ENCODE measurements at regions of chr13 and their contacts with region 1.

Region 1: DNA sequence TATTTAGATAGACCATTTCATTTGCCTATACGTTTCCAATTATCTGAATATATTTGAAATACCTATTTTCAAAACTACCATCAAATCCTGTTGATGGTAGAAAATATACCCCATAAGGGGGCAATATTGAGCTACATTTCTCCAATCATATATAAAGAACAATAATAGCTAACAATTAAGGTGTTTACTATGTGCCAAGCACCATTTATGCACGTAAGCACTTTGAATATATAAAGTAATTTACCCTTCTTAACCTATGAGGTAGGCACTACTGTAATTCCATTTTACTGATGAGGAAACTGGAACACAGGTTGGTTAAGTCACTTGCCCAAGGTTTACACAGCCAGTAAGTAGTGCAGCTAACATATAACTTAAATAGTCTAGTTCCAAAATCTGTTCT is 79.2 kb downstream of the UBL3 start:
- DNase-seq: no peak
- ATAC-seq: no peak
- H3K4me3 Mint-ChIP-seq: no peak overlapping the region
- H3K27ac Mint-ChIP-seq: no peak overlapping the region
- H3K4me1 Mint-ChIP-seq: no peaks in the 10 kb centered on the region
- H3K27me3 Mint-ChIP-seq: no peaks in the 10 kb centered on the region

Region 2: GRCh38 chr13:29428310-29429181 is 342.7 kb before region 1 on chr13:
- CTCF ChIA-PET with region 1: no interaction called
- POLR2A ChIA-PET with region 1: no interaction called
- DNase-seq: no peak
- ATAC-seq: no peak
- H3K4me3 Mint-ChIP-seq: no peak overlapping the region
- H3K27ac Mint-ChIP-seq: no peak overlapping the region
- H3K4me1 Mint-ChIP-seq: no peaks in the 10 kb centered on the region
- H3K27me3 Mint-ChIP-seq: peaks cover 43% of the 10 kb centered on the region

Region 3: GRCh38 chr13:29508130-29508875 is 262.9 kb before region 1 on chr13:
- CTCF ChIA-PET with region 1: interaction called, 13 read pairs
- POLR2A ChIA-PET with region 1: no interaction called
- DNase-seq: peak; percentile 78
- ATAC-seq: peak; percentile 79
- H3K4me3 Mint-ChIP-seq: no peak overlapping the region
- H3K27ac Mint-ChIP-seq: no peak overlapping the region
- H3K4me1 Mint-ChIP-seq: peaks cover 6% of the 10 kb centered on the region
- H3K27me3 Mint-ChIP-seq: no peaks in the 10 kb centered on the region

Region 4: DNA sequence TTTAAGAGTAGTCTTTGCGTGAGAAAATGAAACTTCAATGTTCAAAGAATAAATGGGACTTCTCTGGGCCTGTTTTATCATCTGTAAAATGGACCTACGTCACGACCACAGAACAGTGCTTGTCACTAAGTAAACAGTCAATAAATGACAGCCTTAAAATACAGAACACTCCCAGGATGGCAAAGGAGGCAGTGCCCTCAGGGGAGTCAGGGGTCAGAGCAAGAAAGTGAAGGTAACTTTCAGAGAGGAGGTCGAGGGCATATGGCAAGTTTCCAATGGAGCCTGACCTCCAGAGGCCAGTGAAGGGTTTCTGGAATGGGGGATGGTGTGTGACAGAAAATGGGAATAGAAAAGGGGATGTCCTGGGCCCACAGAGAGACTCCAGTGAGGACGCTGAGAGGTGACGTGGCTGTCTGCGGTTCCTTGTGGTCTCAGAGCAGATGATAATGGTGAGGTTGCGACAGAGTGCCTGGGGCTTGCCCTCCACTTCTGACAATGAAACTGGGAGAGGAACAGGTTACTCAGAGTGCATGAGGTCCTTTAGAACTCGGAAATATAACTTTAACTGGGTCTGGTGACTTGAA is 12.6 kb before region 1 on chr13:
- CTCF ChIA-PET with region 1: interaction called, 16 read pairs
- POLR2A ChIA-PET with region 1: no interaction called
- DNase-seq: peak; percentile 55
- ATAC-seq: peak; percentile 75
- H3K4me3 Mint-ChIP-seq: no peak overlapping the region
- H3K27ac Mint-ChIP-seq: peak overlapping the region; percentile 18
- H3K4me1 Mint-ChIP-seq: peaks cover 23% of the 10 kb centered on the region
- H3K27me3 Mint-ChIP-seq: no peaks in the 10 kb centered on the region

Region 5: GRCh38 chr13:29782798-29783197 is 11.6 kb after region 1 on chr13:
- CTCF ChIA-PET with region 1: interaction called, 11 read pairs
- POLR2A ChIA-PET with region 1: no interaction called
- DNase-seq: no peak
- ATAC-seq: no peak
- H3K4me3 Mint-ChIP-seq: no peak overlapping the region
- H3K27ac Mint-ChIP-seq: no peak overlapping the region
- H3K4me1 Mint-ChIP-seq: no peaks in the 10 kb centered on the region
- H3K27me3 Mint-ChIP-seq: no peaks in the 10 kb centered on the region

Region 6: DNA sequence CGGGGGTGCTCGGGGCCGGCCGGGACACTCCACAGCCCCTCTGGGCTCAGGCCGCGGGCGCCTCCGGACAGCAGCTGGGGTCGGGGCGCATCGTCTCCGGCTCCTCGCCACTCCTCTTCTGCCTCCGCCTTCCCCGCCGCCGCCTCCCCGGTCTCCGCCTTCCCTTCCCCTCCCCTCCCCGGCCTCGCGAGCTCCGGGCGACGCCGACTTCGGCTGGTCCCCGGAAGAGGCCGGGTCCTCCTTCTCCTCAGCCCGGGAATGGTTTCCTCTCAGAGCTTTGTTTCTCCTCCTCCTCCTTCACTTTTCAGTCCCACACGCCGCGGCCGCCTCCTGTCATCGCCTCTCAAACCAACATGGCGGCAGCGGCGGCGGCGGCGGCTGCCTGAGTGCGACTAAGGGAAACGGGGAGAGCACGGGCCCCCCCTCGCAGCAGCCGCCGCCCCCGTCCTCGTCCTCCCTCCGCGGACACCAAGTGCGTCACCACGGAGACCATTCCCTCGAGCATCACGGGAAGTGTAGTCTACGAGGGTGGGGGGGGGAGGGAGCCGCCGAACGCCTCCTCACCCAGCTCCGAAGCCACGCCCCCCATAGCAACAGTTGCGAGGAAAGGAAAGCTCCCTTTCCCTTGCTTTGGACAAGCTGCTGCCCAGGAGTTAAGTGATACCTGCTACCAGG is 79.1 kb after region 1 on chr13 and contains the start of gene UBL3:
- CTCF ChIA-PET with region 1: interaction called, 28 read pairs
- POLR2A ChIA-PET with region 1: no interaction called
- DNase-seq: peak; percentile 96
- ATAC-seq: peak; percentile 89
- H3K4me3 Mint-ChIP-seq: peak within 1 kb of the TSS; percentile 86
- H3K27ac Mint-ChIP-seq: peak within 1 kb of the TSS; percentile 99
- H3K4me1 Mint-ChIP-seq: peaks cover 35% of the 10 kb centered on the region
- H3K27me3 Mint-ChIP-seq: no peaks in the 10 kb centered on the region
- total RNA-seq, gene UBL3: 7.3 to 8.4 TPM

Region 7: DNA sequence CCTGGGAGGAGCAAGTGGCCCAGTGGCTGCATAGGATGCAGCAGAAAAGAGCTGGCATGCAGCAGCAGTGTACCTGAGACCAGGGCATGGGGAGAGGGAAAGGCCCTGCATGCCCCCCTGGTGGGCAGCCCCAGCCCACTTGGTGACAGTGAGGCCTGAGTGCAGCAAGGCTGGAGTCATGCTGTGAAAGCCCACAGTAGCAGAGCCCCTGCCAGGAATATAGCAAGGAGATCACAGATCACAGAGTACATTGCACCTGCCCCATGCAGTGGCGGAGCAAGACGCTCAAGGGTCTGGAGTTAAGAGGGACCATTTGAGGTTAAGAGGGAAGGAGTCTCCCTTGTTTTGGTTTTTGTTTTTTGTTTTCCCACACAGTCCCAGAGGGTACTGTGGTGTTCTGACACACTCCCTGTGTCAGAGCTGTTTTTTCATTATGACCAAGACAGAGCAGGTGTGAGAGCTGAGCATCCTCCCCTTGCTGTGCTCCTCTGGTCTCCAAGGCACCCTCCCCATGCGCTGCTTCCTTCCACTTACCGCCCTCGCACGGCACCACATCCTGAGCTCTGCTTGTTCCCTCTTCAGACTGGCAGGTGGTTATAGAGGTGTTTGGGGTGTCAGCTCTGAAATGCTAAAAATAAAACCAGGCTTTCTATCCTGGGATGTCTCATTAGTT is 164.2 kb after region 1 on chr13:
- CTCF ChIA-PET with region 1: interaction called, 23 read pairs
- POLR2A ChIA-PET with region 1: no interaction called
- DNase-seq: peak; percentile 90
- ATAC-seq: peak; percentile 95
- H3K4me3 Mint-ChIP-seq: peak overlapping the region; percentile 83
- H3K27ac Mint-ChIP-seq: peak overlapping the region; percentile 95
- H3K4me1 Mint-ChIP-seq: peaks cover 44% of the 10 kb centered on the region
- H3K27me3 Mint-ChIP-seq: peaks cover 1% of the 10 kb centered on the region

Region 8: DNA sequence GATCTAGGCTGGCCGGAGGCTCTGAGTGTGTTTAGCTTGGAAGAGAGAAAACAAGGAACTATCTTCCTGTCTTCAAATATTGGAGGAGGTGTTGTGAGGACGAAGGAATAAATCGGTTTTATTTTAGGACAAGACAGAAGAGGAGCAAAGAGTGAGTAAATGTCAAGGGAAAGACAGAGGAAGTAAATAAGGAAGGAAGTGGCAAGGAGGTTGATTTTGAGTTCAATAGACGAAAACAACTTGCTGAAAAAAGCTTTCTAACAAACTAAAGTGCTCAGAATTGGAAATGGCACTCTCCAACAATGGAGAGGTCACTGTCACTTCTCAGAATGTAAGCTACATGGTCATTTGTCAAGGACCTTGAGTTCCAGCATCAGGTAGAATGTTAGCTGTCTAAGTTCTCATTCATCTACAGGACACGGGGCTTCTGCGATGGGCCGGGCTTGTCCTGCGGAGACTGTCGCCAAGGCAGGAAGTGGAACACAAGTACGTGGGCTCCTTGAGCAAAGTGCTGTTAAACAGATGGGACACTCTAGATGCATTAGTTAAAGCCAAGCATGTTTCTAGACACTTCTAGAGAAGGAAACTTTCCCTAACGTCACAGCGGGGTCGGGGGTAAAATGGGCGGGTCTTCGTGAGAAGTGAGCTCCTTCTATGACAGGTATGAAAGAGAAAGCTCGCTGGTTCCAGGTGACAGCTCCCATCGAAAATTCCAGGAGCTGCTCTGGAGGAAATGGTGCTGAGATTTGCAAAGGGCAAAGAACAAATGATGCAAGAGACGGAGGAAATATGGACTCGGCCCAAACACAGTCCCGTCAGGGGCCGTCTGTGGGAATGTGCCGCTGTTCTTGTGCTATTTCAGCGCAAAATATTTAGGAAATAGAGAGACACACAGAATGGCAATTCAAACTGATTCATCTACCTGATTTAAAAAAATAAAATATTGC is 183.1 kb after region 1 on chr13:
- CTCF ChIA-PET with region 1: interaction called, 10 read pairs
- POLR2A ChIA-PET with region 1: no interaction called
- DNase-seq: peak; percentile 75
- ATAC-seq: peak; percentile 96
- H3K4me3 Mint-ChIP-seq: peak overlapping the region; percentile 69
- H3K27ac Mint-ChIP-seq: peak overlapping the region; percentile 88
- H3K4me1 Mint-ChIP-seq: peaks cover 52% of the 10 kb centered on the region
- H3K27me3 Mint-ChIP-seq: peaks cover 2% of the 10 kb centered on the region